ENCODE measurements at regions of chr18 and their contacts with region 1.

Region 1: DNA sequence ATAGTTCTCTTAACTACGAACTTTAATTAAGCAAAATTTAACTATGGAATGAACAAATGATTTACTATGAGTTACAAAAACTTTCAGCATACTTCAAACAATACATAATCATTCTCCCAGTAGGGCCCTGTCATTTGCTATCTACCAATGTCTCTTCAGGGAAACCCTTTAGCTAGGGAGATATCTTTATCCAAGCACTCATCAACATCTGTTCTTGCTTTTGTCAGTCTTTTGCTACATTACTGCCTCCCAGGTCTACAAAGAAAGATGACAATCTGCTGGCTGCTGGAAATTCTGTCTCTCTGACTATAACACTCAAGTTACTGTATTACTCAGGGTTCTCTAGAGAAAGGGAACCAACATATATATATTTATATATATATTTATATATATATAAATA is 1626.3 kb upstream of the CELF4 start:
- DNase-seq: no peak
- H3K4me3 ChIP-seq: no peak overlapping the region
- H3K27ac ChIP-seq: no peak overlapping the region
- H3K4me1 ChIP-seq: no peaks in the 10 kb centered on the region
- H3K27me3 ChIP-seq: no peaks in the 10 kb centered on the region
- CTCF ChIP-seq: no peak
- POLR2A ChIP-seq: no peak

Region 2: GRCh38 chr18:39235118-39235719 is 43.3 kb after region 1 on chr18:
- intact Hi-C with region 1: loop called (anchors 2 kb)
- DNase-seq: no peak
- H3K4me3 ChIP-seq: no peak overlapping the region
- H3K27ac ChIP-seq: no peak overlapping the region
- H3K4me1 ChIP-seq: no peaks in the 10 kb centered on the region
- H3K27me3 ChIP-seq: no peaks in the 10 kb centered on the region
- CTCF ChIP-seq: no peak
- POLR2A ChIP-seq: no peak